ENCODE measurements at regions of chrX and their contacts with region 1.

Region 1: DNA sequence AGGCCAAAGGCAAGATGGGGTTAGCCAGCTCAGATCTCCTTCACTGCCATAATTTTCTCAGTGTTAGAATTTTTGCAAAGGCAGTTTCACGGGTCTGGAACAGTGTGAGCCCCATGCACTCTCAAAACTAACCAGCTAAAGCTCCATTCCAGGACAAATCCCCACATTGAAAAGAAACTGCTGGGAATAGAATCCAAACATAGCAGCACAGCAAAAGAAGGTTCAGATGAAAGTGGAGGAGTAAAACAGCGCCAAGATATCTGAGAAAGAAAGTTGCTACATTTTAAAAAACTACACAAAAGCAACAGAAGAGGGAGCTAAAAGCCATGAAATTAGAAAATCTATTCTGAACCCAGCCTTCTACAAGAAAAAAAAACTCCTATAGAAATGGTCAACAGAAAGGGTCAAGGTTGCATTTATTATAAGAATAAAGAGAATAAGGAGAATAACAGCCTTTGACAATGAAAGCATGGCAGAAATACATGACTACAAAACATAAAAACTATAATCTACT is 39.6 kb upstream of the SLC7A3 start:
- DNase-seq: no peak
- ATAC-seq: no peak
- H3K4me3 ChIP-seq: no peak overlapping the region
- H3K27ac ChIP-seq: no peak overlapping the region
- H3K4me1 ChIP-seq: no peaks in the 10 kb centered on the region
- H3K27me3 ChIP-seq: no peaks in the 10 kb centered on the region
- CTCF ChIP-seq: peak in 5 of 7 experiments; percentile 29 to 44 (median 43)
- POLR2A ChIP-seq: no peak

Region 2: GRCh38 chrX:70176938-70177533 is 793.5 kb before region 1 on chrX and contains the start of gene DGAT2L6:
- intact Hi-C with region 1: no loop called
- DNase-seq: no peak
- ATAC-seq: no peak
- H3K4me3 ChIP-seq: no peak within 1 kb of the TSS
- H3K27ac ChIP-seq: no peak within 1 kb of the TSS
- H3K4me1 ChIP-seq: no peaks in the 10 kb centered on the region
- H3K27me3 ChIP-seq: no peaks in the 10 kb centered on the region
- CTCF ChIP-seq: no peak
- POLR2A ChIP-seq: no peak
- total RNA-seq, gene DGAT2L6: not detected

Region 3: GRCh38 chrX:70525733-70526132 is 444.8 kb before region 1 on chrX:
- intact Hi-C with region 1: no loop called
- DNase-seq: peak; percentile 89 to 95 (median 92)
- ATAC-seq: peak; percentile 99
- H3K4me3 ChIP-seq: no peak overlapping the region
- H3K27ac ChIP-seq: peak overlapping the region; percentile 39 to 81 (median 76)
- H3K4me1 ChIP-seq: peaks cover 48% of the 10 kb centered on the region
- H3K27me3 ChIP-seq: no peaks in the 10 kb centered on the region
- CTCF ChIP-seq: no peak
- POLR2A ChIP-seq: no peak

Region 4: DNA sequence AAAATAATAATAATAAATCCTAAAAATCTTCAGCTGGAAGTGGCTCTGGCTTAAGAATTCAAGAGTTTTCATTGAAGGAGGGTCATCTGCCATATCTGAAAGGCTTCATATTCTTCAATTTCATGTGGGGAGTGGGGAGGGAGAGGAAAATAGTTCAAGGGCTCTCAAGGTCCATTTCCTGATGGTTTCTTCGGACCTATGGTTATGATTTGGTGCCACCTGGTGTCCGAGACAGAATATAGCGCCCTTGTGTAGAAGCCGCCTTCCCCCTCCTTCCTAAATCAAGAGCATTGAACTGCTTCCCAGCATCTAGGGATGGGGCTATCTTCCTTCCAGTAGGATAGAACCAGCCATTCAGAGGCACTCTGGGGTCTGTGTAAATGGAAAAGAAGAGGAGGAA is 208.4 kb after region 1 on chrX:
- intact Hi-C with region 1: loop called (anchors 10 kb)
- DNase-seq: peak; percentile 57 to 75 (median 68)
- ATAC-seq: peak; percentile 27
- H3K4me3 ChIP-seq: no peak overlapping the region
- H3K27ac ChIP-seq: no peak overlapping the region
- H3K4me1 ChIP-seq: peaks cover 27% of the 10 kb centered on the region
- H3K27me3 ChIP-seq: no peaks in the 10 kb centered on the region
- CTCF ChIP-seq: peak; percentile 37 to 76 (median 68)
- POLR2A ChIP-seq: no peak

Region 5: GRCh38 chrX:71629467-71629866 is 658.9 kb after region 1 on chrX:
- intact Hi-C with region 1: no loop called
- DNase-seq: no peak
- ATAC-seq: no peak
- H3K4me3 ChIP-seq: no peak overlapping the region
- H3K27ac ChIP-seq: no peak overlapping the region
- H3K4me1 ChIP-seq: no peaks in the 10 kb centered on the region
- H3K27me3 ChIP-seq: no peaks in the 10 kb centered on the region
- CTCF ChIP-seq: no peak
- POLR2A ChIP-seq: no peak